ENCODE measurements at regions of chr22 and their contacts with region 1.

Region 1: GRCh38 chr22:35582861-35583670 is 34.1 kb downstream of the MB start:
- DNase-seq: peak; percentile 56

Region 2: DNA sequence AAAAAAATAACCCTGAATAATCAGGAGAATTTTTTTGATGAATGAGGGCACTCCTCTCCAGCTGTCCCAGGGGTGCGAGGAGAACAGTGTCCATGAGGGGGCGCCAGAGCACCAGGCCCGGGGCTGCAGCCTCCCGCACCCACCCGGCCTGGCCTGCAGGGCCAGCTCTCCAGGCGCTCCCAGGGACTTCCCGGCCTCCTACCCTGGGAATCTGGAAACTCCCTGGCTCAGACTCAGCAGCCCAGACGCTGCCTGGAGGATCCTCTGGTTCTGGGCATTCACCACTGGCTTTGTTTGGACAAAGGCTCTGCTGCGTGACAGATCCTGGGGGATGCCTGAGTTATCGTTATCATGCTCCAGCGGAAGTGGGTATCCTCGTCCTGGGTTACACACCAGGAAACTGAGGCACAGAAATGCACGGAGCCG is 152.2 kb before region 1 on chr22:
- in situ Hi-C with region 1: loop called (anchors 10 kb)
- DNase-seq: peak; percentile 84

Region 3: DNA sequence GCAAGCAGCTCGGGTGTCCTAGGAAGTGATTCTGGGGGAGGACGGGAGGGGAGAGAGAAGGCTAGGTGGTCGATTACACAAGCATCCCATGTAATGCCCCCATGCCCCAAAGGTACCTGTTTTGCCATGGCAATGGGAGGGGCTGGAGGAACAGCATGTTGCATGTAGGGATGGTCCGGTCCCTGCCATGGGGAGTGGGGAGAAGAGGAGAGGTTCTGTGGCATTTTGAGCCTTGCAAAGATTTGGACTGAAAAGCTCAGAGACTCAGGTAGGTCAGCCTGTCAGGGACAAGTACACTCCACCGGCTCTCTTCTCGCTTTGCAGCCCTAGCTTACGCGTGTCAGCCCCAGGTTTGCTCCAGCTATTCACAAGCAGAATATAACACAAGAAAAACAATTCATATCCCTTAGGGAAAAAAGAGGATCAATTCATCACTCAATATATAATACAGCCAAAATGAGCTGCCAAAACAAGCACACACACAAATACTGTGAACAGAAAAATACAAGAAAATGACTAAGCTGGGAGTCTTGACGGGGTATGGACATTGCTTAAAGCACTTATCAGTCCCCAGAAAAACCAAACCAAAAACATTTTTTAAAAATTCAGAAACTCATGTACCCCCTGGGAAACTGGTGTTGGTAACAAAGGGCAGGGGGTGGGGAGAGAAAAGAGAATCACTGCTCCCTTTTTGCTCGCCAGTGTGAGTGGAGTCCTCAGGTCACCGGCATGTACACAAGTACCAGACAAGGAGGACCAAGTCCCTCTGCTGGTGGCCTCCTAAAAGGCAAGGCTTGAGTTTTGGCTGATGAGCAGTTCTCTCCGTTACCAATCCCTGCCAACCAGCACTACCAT is 156.2 kb after region 1 on chr22:
- in situ Hi-C with region 1: no loop called
- DNase-seq: no peak

Measured in ACHN (cell line).